PC-3 (cell line): ENCODE measurements at regions of chr10 and their contacts with region 1.

Region 1: GRCh38 chr10:36096571-36096970 is 454.5 kb upstream of the FZD8 start:
- DNase-seq: peak; percentile 97
- ATAC-seq: peak; percentile 71
- H3K4me3 ChIP-seq: no peak overlapping the region
- H3K27ac ChIP-seq: peak overlapping the region; percentile 58
- H3K4me1 ChIP-seq: peaks cover 29% of the 10 kb centered on the region
- H3K27me3 ChIP-seq: no peaks in the 10 kb centered on the region
- CTCF ChIP-seq: no peak

Region 2: GRCh38 chr10:35447693-35448407 is 648.7 kb before region 1 on chr10:
- CTCF ChIA-PET with region 1: no interaction called
- POLR2A ChIA-PET with region 1: no interaction called
- intact Hi-C with region 1: no loop called
- DNase-seq: peak; percentile 91
- ATAC-seq: peak; percentile 77
- H3K4me3 ChIP-seq: peak overlapping the region; percentile 13
- H3K27ac ChIP-seq: peak overlapping the region; percentile 23
- H3K4me1 ChIP-seq: peaks cover 24% of the 10 kb centered on the region
- H3K27me3 ChIP-seq: no peaks in the 10 kb centered on the region
- CTCF ChIP-seq: no peak

Region 3: DNA sequence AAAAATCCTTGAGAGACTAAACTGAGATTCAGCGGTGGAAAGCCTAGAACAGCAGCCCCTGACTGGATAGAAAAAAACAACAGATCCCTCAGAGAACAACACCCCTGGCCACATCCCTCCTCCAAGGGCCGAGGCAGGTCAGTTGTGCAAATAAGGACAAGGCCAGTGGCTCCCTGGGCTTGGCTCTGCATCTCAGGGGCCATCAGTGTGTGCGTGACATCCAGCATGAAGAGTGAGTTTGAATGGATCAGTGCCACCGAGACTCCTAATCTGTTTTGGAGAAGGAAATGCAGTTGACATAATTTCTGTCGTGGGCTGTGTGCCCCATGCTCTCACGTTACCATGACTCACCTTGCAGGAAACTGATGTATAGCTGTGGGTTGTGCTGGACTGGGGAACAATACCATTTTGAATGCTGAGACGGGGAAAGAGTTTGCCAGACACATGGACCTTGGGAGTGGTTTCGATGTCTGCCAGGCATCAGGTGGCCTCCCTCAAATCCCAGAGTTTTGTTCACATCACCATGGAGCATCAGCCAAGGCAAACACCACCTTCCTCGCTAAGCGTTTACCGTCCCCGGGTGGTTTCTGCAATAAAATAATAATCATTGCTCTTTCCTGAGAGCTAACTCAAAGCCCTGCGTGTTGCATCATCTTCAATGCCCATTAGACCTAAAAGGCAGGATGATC is 301.3 kb before region 1 on chr10:
- CTCF ChIA-PET with region 1: no interaction called
- POLR2A ChIA-PET with region 1: interaction called, 4 read pairs
- intact Hi-C with region 1: loop called (anchors 5 kb)
- DNase-seq: peak; percentile 100
- ATAC-seq: peak; percentile 94
- H3K4me3 ChIP-seq: peak overlapping the region; percentile 12
- H3K27ac ChIP-seq: peak overlapping the region; percentile 80
- H3K4me1 ChIP-seq: peaks cover 46% of the 10 kb centered on the region
- H3K27me3 ChIP-seq: no peaks in the 10 kb centered on the region
- CTCF ChIP-seq: no peak

Region 4: GRCh38 chr10:36023939-36024338 is 72.6 kb before region 1 on chr10:
- CTCF ChIA-PET with region 1: no interaction called
- POLR2A ChIA-PET with region 1: no interaction called
- intact Hi-C with region 1: loop called (anchors 1 kb)
- DNase-seq: peak; percentile 100
- ATAC-seq: peak; percentile 98
- H3K4me3 ChIP-seq: no peak overlapping the region
- H3K27ac ChIP-seq: peak overlapping the region; percentile 69
- H3K4me1 ChIP-seq: peaks cover 15% of the 10 kb centered on the region
- H3K27me3 ChIP-seq: no peaks in the 10 kb centered on the region
- CTCF ChIP-seq: no peak